PC-3 (cell line): ENCODE measurements at regions of chr3 and their contacts with region 1.

Region 1: DNA sequence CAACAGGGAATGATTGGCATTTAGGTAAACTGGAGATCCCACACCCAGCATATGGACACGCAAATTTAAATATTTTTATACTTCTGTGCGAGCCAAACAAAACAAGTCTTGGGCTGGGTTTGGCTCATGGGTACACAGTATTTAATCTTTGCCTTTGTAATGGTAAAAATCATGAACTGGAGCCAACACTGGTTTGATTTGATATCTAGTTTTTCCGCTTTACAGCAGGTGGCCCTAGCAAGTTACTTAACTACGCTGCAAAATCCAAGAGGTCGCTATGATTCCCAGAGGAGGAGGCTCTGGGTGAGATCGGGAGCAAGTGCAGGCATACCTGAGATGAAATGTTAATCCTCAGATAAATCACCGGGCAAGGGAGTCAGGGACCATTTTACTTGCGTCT is 207.9 kb upstream of the SATB1 start:
- DNase-seq: peak; percentile 41
- ATAC-seq: no peak
- H3K4me3 ChIP-seq: no peak overlapping the region
- H3K27ac ChIP-seq: no peak overlapping the region
- H3K4me1 ChIP-seq: peaks cover 28% of the 10 kb centered on the region
- H3K27me3 ChIP-seq: no peaks in the 10 kb centered on the region
- CTCF ChIP-seq: 0 out of 2 replicates have a peak, but pooled peaks have one; percentile 11

Region 2: DNA sequence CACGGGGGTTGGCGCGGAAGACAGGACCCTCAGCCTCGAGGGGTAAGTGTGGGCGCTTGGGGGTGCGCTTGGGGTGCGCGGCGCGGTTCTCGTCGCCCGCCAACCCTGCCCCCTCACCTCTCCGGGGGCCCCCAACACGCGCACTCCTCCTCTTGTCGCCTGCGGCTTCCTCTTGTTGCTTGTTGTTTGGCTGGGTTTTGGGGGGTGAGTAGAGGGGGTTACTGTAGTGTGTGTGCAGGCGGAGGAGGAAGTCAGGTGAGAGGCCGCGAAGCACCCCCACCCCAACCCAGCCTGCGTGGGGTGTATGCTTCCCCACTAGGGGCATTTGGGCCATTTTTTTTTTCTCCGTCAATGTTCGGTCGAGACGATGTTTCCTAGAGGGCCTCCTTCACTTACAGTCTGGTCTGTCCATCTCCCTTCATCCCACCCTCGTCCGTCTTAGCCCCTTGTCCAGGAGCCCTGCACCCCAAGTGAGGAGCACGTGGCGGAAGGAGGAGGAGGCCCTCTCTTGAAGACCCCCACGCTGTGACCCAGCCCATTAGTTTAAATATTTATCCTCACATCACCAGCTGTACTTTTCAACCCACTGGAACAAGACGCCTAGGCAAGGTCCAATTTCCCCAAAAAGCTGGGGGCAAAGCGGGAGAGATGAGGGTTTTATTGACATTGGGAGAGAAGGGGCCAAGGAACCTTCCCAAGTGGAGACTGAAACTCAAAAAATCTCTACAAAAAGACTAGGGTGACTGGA is 187.4 kb before region 1 on chr3:
- CTCF ChIA-PET with region 1: no interaction called
- POLR2A ChIA-PET with region 1: no interaction called
- intact Hi-C with region 1: loop called (anchors 2 kb)
- DNase-seq: no peak
- ATAC-seq: peak; percentile 9
- H3K4me3 ChIP-seq: peak overlapping the region; percentile 74
- H3K27ac ChIP-seq: no peak overlapping the region
- H3K4me1 ChIP-seq: peaks cover 22% of the 10 kb centered on the region
- H3K27me3 ChIP-seq: peaks cover 28% of the 10 kb centered on the region
- CTCF ChIP-seq: no peak

Region 3: GRCh38 chr3:18575573-18575972 is 57.4 kb before region 1 on chr3:
- CTCF ChIA-PET with region 1: no interaction called
- POLR2A ChIA-PET with region 1: no interaction called
- intact Hi-C with region 1: loop called (anchors 5 kb)
- DNase-seq: peak; percentile 85
- ATAC-seq: peak; percentile 82
- H3K4me3 ChIP-seq: peak overlapping the region; percentile 33; the same call in 1 of the 2 replicates
- H3K27ac ChIP-seq: peak overlapping the region; percentile 81
- H3K4me1 ChIP-seq: peaks cover 50% of the 10 kb centered on the region
- H3K27me3 ChIP-seq: no peaks in the 10 kb centered on the region
- CTCF ChIP-seq: no peak

Region 4: DNA sequence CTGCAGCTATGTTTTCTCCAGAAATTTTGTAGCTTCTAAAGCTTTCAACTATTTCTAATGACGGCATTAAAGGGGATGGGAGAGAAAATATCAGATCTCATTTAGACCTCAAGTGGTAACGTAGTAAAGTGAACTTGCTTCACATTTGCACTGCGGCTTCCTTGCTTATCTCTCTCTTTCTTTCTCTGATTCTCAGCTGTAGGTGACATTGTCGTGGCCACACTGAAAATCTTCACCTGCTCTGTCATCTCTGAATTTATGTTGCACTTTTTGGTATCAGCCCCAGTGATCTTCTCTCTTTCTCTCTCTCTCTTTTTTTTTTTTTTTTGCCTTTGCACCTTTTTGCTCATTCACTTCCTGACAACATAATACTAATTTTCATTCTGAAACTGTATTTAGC is 46.2 kb after region 1 on chr3:
- CTCF ChIA-PET with region 1: no interaction called
- POLR2A ChIA-PET with region 1: no interaction called
- intact Hi-C with region 1: no loop called
- DNase-seq: no peak
- ATAC-seq: no peak
- H3K4me3 ChIP-seq: no peak overlapping the region
- H3K27ac ChIP-seq: no peak overlapping the region
- H3K4me1 ChIP-seq: no peaks in the 10 kb centered on the region
- H3K27me3 ChIP-seq: no peaks in the 10 kb centered on the region
- CTCF ChIP-seq: no peak

Region 5: GRCh38 chr3:18758047-18758704 is 125.2 kb after region 1 on chr3:
- CTCF ChIA-PET with region 1: no interaction called
- POLR2A ChIA-PET with region 1: no interaction called
- intact Hi-C with region 1: loop called (anchors 1 kb)
- DNase-seq: peak; percentile 99
- ATAC-seq: peak; percentile 95
- H3K4me3 ChIP-seq: no peak overlapping the region
- H3K27ac ChIP-seq: peak overlapping the region; percentile 84
- H3K4me1 ChIP-seq: peaks cover 14% of the 10 kb centered on the region
- H3K27me3 ChIP-seq: no peaks in the 10 kb centered on the region
- CTCF ChIP-seq: peak; percentile 92

Region 6: DNA sequence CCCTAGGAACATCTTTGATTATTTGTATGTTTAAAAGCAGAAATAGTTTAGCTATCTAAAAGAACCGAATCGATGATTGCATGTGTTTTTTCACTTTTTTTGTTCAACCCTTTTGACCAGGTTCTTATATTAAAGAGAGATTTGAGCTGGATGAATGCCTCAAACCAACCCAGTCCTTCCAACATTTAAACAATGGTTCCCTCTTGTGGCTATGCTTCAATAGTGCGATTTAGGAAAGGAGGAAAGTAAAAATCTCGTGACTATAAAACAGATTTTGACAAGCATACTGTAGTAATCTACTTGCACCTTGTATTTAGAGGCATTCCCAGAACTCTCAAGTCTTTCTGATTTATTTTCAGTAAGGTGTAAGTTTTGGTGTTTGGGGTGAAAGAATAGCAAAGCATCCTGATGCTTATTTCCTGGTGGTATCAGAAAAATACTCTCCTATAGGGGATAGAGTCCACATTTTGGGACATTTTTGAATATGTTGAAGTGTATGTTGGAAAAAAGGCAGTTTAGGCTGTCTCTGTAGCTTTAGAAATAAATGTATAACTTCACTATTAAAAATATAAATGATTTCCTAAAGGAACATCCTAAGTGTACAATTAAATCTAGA is 355.7 kb after region 1 on chr3:
- CTCF ChIA-PET with region 1: no interaction called
- POLR2A ChIA-PET with region 1: no interaction called
- intact Hi-C with region 1: loop called (anchors 10 kb)
- DNase-seq: peak; percentile 81
- ATAC-seq: peak; percentile 76
- H3K4me3 ChIP-seq: peak overlapping the region; percentile 32
- H3K27ac ChIP-seq: peak overlapping the region; percentile 27
- H3K4me1 ChIP-seq: peaks cover 13% of the 10 kb centered on the region
- H3K27me3 ChIP-seq: no peaks in the 10 kb centered on the region
- CTCF ChIP-seq: peak; percentile 94